ENCODE measurements at regions of chr5 and their contacts with region 1.

Region 1: DNA sequence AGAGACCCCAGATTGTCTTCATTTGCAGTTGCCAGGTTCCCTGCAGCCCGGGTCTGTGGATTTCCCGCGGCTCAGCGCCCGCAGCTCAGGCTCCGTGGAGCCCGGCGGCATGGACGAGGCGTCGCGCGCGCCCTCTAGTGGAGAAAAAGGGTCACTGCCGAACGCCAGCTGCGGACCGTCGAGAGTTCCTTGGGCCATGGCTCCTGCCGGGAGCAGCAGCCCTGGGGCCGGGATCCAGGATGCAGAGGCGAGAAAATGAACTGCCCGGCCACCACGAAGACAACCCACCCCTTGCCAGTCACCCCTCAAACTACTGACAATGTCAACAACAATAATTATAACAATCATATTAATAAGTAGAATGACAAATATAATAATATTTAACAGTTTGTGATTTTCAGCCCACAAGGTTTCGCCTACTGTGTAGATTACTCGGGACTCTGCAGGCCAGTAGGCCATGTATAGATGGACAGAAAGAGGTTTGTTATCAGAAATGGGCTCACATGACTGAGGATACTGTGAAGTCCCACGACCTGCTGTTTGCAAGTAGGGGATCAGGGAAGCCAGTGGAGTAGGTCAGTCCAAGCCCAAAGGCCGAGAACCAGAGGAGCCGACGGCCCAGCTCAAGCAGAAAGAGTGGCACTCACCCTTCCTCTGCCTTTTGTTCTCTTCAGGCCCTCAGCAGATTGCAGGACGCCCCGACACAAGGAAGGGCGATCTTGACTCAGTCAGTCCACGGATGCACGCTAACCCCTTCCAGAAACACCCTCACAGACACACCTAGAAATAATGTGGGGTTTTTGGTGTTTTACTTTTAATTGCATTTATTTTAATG is 43.1 kb downstream of the BOD1 start:
- DNase-seq: peak; percentile 43 to 77
- H3K4me3 ChIP-seq: peak overlapping the region; percentile 36; the same call in 1 of the 2 replicates
- H3K27ac ChIP-seq: no peak overlapping the region
- H3K4me1 ChIP-seq: peaks cover 14% of the 10 kb centered on the region
- H3K27me3 ChIP-seq: no peaks in the 10 kb centered on the region
- CTCF ChIP-seq: peak; percentile 94

Region 2: GRCh38 chr5:172984243-172984953 is 588.9 kb before region 1 on chr5:
- CTCF ChIA-PET with region 1: no interaction called
- POLR2A ChIA-PET with region 1: no interaction called
- intact Hi-C with region 1: loop called (anchors 5 kb)
- DNase-seq: peak; percentile 63 to 79
- H3K4me3 ChIP-seq: peak overlapping the region; percentile 87
- H3K27ac ChIP-seq: peak overlapping the region; percentile 77
- H3K4me1 ChIP-seq: peaks cover 13% of the 10 kb centered on the region; the same call in 1 of the 2 replicates
- H3K27me3 ChIP-seq: no peaks in the 10 kb centered on the region
- CTCF ChIP-seq: peak; percentile 65

Region 3: DNA sequence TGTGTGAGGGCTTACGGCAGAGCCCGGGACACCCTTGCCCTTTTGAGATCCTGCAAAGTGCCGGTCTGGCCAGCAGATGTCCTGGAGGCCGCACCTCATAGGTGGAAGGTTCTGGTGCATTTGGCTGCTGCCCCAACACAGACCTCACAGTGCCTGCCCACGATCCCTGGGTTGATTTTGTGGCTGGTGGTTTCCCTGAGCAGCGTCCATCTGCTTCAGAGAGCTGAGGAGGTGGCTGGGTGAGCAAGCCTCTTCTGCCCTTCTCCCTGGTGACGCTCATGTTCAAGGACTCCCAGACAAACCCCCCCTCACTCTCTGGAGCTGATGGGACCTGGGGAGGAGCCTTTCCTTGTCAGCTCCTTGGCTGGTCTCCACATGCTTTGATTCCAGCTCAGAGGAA is 410.1 kb before region 1 on chr5:
- CTCF ChIA-PET with region 1: no interaction called
- POLR2A ChIA-PET with region 1: no interaction called
- intact Hi-C with region 1: loop called (anchors 10 kb)
- DNase-seq: no peak
- H3K4me3 ChIP-seq: no peak overlapping the region
- H3K27ac ChIP-seq: no peak overlapping the region
- H3K4me1 ChIP-seq: no peaks in the 10 kb centered on the region
- H3K27me3 ChIP-seq: no peaks in the 10 kb centered on the region
- CTCF ChIP-seq: no peak

Region 4: DNA sequence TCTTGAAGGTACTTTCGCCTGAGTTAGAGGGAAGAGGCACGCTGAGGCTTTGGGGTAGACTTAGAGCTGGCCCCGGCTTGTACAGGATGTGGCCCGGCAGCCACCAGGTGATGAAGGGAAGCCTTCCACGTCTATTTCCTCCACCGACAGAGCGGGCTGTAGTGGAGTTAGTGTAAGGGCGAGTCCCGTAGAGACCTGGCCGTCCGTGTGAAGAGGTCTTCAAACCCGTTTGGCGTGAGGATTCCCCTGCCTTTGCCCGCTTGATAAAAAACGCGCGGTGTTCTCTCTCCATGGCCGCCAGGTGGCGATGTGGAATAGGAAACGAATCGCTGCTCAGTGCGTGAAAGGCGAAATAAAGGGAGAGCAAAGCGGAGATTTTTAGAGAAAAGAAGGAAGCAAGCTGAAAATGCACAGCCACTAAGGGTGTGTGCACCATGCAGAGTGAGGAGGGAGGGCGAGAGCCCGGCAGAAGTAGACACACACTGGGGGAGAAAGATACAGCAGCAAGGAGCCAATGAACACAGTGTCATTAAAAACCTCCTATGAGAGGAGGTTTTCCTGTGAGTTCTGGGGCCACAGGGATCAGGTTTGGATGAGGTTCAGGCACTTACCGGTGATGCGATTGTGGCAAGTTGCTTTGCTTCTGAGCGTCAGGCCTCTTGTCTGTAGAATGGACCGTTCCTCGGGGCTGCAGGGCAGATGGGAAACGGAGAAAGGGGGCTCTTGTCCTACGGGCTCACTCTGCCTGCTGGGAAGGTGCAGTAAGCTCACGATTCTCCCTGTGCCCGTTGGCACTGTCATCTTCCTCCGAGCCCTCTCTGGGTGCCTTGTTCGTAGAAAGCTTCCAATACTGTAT is 279.3 kb before region 1 on chr5:
- CTCF ChIA-PET with region 1: interaction called, 10 read pairs
- POLR2A ChIA-PET with region 1: no interaction called
- intact Hi-C with region 1: loop called (anchors 1 kb)
- DNase-seq: peak; percentile 71 to 83
- H3K4me3 ChIP-seq: peak overlapping the region; percentile 45; the same call in 1 of the 2 replicates
- H3K27ac ChIP-seq: peak overlapping the region; percentile 28
- H3K4me1 ChIP-seq: peaks cover 26% of the 10 kb centered on the region
- H3K27me3 ChIP-seq: no peaks in the 10 kb centered on the region
- CTCF ChIP-seq: peak; percentile 92

Region 5: GRCh38 chr5:173454754-173455614 is 118.4 kb before region 1 on chr5:
- CTCF ChIA-PET with region 1: no interaction called
- POLR2A ChIA-PET with region 1: no interaction called
- intact Hi-C with region 1: loop called (anchors 2 kb)
- DNase-seq: peak; percentile 80 to 98
- H3K4me3 ChIP-seq: peak overlapping the region; percentile 11; the same call in 1 of the 2 replicates
- H3K27ac ChIP-seq: peak overlapping the region; percentile 100
- H3K4me1 ChIP-seq: peaks cover 89% of the 10 kb centered on the region
- H3K27me3 ChIP-seq: no peaks in the 10 kb centered on the region
- CTCF ChIP-seq: peak; percentile 7; the same call in 1 of the 2 replicates

Region 6: GRCh38 chr5:173542964-173543363 is 30.4 kb before region 1 on chr5:
- CTCF ChIA-PET with region 1: no interaction called
- POLR2A ChIA-PET with region 1: no interaction called
- intact Hi-C with region 1: no loop called
- DNase-seq: no peak
- H3K4me3 ChIP-seq: no peak overlapping the region
- H3K27ac ChIP-seq: no peak overlapping the region
- H3K4me1 ChIP-seq: 0 out of 2 replicates have a peak, but pooled peaks cover 5% of the 10 kb centered on the region
- H3K27me3 ChIP-seq: no peaks in the 10 kb centered on the region
- CTCF ChIP-seq: no peak

Region 7: DNA sequence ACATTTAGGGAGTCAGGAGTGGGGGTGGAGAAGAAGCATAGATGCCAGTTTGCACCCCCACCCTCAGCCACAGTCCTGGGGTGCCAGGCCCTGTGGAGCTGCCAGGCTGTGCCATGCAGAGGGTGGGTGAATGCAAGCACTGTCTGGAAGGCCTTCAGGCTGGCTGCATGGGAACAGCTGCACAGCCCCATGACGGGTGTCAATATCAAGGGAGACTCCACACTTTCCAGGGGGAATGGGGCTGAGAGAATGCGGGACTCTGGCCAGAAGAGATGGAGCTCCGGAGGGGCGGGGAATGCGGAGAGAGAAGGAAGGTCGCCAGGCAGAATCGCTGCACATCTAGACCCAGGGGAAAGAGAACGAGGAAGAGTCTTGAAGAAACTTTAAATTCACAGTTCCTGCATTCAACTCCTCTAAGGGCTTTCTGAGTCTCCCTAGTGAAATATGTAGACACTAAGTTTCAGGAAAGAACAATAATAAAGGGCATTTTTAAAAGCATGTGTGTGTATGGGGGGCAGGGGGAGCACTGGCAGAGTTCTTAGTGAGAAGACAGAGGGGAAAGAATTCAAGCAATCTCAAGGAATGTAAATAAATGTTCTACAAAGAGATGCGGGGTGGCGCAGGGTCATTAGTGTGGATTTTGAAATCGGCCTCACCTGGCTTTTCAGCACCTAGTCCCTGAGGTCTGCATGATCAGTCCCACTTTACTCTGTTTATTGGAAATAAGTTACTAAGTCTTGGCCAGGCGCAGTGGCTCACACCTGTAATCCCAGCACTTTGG is 16.0 kb before region 1 on chr5:
- CTCF ChIA-PET with region 1: no interaction called
- POLR2A ChIA-PET with region 1: no interaction called
- intact Hi-C with region 1: no loop called
- DNase-seq: no peak
- H3K4me3 ChIP-seq: no peak overlapping the region
- H3K27ac ChIP-seq: no peak overlapping the region
- H3K4me1 ChIP-seq: no peaks in the 10 kb centered on the region
- H3K27me3 ChIP-seq: no peaks in the 10 kb centered on the region
- CTCF ChIP-seq: no peak

Measured in PC-9 (cell line).